GM10248 (cell line): ENCODE measurements at regions of chr4 and their contacts with region 1.

Region 1: GRCh38 chr4:54687887-54688841 is 30.4 kb downstream of the KIT start:
- DNase-seq: no peak
- CTCF ChIP-seq: no peak

Region 2: GRCh38 chr4:54659313-54659712 is 28.9 kb before region 1 on chr4:
- CTCF ChIA-PET with region 1: interaction called, 11 read pairs
- POLR2A ChIA-PET with region 1: no interaction called
- DNase-seq: no peak
- CTCF ChIP-seq: no peak

Region 3: DNA sequence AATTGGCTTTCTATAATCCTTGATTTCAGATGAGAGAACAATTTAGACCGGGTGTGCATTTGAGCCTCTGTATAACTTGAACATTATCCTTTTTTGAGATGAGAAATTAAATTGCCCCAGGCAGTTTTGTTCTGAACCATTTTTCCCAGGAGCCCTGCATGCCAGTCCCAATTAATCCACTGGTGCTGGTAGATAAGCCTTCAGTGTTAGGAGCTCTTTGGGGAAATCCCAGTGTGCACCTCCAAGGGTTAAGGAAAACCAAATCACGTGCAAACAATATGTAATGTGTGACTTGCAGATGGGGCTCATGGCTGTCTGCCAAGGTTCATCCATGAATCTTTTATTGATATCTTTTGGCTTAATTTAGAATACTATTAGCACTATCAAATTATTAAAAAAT is 12.8 kb after region 1 on chr4:
- CTCF ChIA-PET with region 1: interaction called, 10 read pairs
- POLR2A ChIA-PET with region 1: no interaction called
- DNase-seq: no peak
- CTCF ChIP-seq: no peak